Mammary epithelial cell (primary cell): ENCODE measurements at regions of chr13 and their contacts with region 1.

Region 1: DNA sequence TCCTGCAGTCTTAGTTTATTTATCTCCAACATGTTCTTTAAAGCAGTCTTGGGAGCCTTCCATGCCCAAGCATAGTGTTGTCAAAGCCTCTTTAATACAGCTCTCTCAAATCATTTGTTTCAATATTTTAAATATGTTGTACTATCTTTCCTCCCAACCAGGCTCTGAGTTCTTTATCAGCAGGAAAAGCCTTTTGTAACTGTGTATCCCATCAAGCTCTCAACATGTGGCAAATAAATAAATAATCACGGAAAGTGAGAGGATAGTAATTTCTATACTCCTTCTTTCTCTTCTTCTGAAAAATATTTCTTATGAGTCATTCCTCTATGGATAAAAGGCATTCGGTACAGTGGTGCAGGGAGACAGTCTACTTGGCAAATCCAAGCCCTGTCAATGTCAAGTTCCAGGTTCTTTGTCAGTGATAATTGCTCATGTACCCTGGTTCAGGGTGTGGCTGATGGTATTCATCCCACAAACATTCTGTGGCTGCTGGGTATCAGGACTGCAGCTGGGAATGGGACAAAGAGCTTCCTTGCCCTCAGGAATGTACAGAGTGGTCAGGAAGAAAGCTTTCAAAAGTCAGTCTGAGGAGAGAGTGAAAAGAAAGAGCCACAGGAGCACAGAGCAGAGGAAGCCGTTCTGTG is 384.3 kb downstream of the EFNB2 start:
- DNase-seq: peak; percentile 99
- H3K4me3 ChIP-seq: no peak overlapping the region
- H3K27ac ChIP-seq: peak overlapping the region; percentile 98
- H3K4me1 ChIP-seq: peaks cover 61% of the 10 kb centered on the region
- H3K27me3 ChIP-seq: no peaks in the 10 kb centered on the region
- CTCF ChIP-seq: no peak

Region 2: DNA sequence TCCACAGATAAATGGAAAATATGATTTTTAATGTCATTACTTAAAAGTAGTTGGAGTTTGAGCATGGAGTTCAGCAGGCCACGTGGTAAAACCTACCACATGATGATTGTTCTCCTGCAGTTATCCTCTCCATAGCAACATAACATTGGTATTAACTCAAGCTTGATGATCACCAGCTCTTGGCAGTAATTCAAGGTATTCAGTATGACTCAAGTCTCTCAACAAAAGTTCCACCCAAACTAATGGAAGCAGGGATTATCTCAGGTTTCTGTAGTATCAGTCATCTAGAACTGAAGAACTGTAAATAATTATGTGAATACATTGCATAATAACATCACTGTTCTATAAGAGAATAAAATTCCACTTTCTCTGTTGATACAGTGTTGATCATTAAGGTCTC is 708.2 kb before region 1 on chr13:
- CTCF ChIA-PET with region 1: no interaction called
- dilution Hi-C with region 1: loop called (anchors 25 kb)
- in situ Hi-C with region 1: no loop called
- intact Hi-C with region 1: no loop called
- DNase-seq: peak; percentile 99
- H3K4me3 ChIP-seq: no peak overlapping the region
- H3K27ac ChIP-seq: peak overlapping the region; percentile 97
- H3K4me1 ChIP-seq: no peaks in the 10 kb centered on the region
- H3K27me3 ChIP-seq: no peaks in the 10 kb centered on the region
- CTCF ChIP-seq: no peak

Region 3: GRCh38 chr13:105920375-105920774 is 230.8 kb before region 1 on chr13:
- CTCF ChIA-PET with region 1: no interaction called
- dilution Hi-C with region 1: no loop called
- in situ Hi-C with region 1: no loop called
- intact Hi-C with region 1: loop called (anchors 5 kb)
- DNase-seq: peak; percentile 90
- H3K4me3 ChIP-seq: no peak overlapping the region
- H3K27ac ChIP-seq: peak overlapping the region; percentile 77
- H3K4me1 ChIP-seq: peaks cover 36% of the 10 kb centered on the region
- H3K27me3 ChIP-seq: no peaks in the 10 kb centered on the region
- CTCF ChIP-seq: no peak

Region 4: GRCh38 chr13:106083620-106084350 is 67.4 kb before region 1 on chr13:
- CTCF ChIA-PET with region 1: no interaction called
- dilution Hi-C with region 1: no loop called
- in situ Hi-C with region 1: no loop called
- intact Hi-C with region 1: loop called (anchors 2 kb)
- DNase-seq: peak; percentile 71
- H3K4me3 ChIP-seq: no peak overlapping the region
- H3K27ac ChIP-seq: peak overlapping the region; percentile 14
- H3K4me1 ChIP-seq: peaks cover 6% of the 10 kb centered on the region
- H3K27me3 ChIP-seq: no peaks in the 10 kb centered on the region
- CTCF ChIP-seq: peak; percentile 87 to 90

Region 5: GRCh38 chr13:106100171-106100919 is 50.8 kb before region 1 on chr13:
- CTCF ChIA-PET with region 1: no interaction called
- dilution Hi-C with region 1: no loop called
- in situ Hi-C with region 1: no loop called
- intact Hi-C with region 1: loop called (anchors 2 kb)
- DNase-seq: no peak
- H3K4me3 ChIP-seq: no peak overlapping the region
- H3K27ac ChIP-seq: no peak overlapping the region
- H3K4me1 ChIP-seq: peaks cover 34% of the 10 kb centered on the region
- H3K27me3 ChIP-seq: no peaks in the 10 kb centered on the region
- CTCF ChIP-seq: no peak

Region 6: DNA sequence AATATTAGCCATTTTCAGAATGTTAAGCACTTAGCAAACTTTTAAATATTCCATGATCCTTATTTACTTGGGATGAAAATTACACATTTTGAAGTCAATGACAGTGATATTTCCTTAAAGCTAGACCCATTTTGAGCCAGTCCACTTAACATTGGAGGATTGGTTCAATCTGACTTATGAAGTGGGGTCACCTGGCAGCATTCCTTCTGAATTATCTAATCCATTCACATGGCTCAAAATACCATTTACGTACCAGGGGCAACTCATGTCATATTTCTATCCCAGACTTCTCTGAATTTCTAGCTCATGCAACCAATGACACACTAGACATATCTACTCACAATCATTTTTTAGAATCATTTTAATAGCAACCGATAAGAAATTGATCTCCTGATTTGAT is 71.3 kb after region 1 on chr13:
- CTCF ChIA-PET with region 1: no interaction called
- dilution Hi-C with region 1: no loop called
- in situ Hi-C with region 1: no loop called
- intact Hi-C with region 1: no loop called
- DNase-seq: no peak
- H3K4me3 ChIP-seq: no peak overlapping the region
- H3K27ac ChIP-seq: no peak overlapping the region
- H3K4me1 ChIP-seq: no peaks in the 10 kb centered on the region
- H3K27me3 ChIP-seq: no peaks in the 10 kb centered on the region
- CTCF ChIP-seq: no peak

Region 7: GRCh38 chr13:106318941-106319411 is 167.8 kb after region 1 on chr13:
- CTCF ChIA-PET with region 1: no interaction called
- dilution Hi-C with region 1: no loop called
- in situ Hi-C with region 1: no loop called
- intact Hi-C with region 1: loop called (anchors 1 kb)
- DNase-seq: peak; percentile 94
- H3K4me3 ChIP-seq: no peak overlapping the region
- H3K27ac ChIP-seq: peak overlapping the region; percentile 68
- H3K4me1 ChIP-seq: peaks cover 19% of the 10 kb centered on the region
- H3K27me3 ChIP-seq: no peaks in the 10 kb centered on the region
- CTCF ChIP-seq: no peak

Region 8: DNA sequence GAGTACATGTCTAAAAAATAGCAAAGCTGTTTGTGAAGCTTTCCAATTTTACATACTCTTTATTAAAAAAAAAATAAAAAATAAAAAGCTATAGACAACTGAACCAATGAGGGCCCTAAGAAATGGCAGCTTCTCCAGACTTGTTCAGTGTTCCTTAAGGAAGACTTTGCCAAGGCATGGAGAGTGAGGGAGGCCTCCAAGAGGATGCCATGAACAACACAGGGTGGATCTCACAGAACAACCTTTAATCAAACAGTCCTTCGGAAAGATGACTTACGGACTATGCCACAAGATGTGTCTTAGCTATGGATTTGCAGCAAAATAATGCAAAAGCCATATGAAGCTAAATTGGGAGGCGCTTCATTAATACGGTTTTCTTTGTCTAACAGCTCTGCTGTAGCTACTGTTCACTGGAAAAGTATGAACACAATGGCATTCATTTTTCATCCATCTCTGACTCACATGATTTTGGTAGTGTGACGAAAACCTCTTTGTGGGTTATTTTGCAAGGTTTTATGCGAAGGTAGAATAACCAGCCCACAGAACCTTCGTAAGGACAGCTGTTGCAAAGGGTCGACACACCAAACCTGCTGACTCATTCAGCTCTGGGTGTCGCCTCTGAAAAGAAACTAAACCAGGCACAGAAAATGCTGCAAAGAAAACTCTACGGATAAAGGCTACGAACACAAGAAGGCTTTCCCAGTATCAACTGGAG is 356.5 kb after region 1 on chr13:
- CTCF ChIA-PET with region 1: no interaction called
- dilution Hi-C with region 1: no loop called
- in situ Hi-C with region 1: no loop called
- intact Hi-C with region 1: loop called (anchors 10 kb)
- DNase-seq: peak; percentile 97
- H3K4me3 ChIP-seq: peak overlapping the region; percentile 8 to 51 (median 45)
- H3K27ac ChIP-seq: peak overlapping the region; percentile 98
- H3K4me1 ChIP-seq: peaks cover 35% of the 10 kb centered on the region
- H3K27me3 ChIP-seq: no peaks in the 10 kb centered on the region
- CTCF ChIP-seq: no peak